Activated naive CD8-positive, alpha-beta T cell treated with anti-CD3 and anti-CD28 coated beads, Interleukin-2, amount 10 ng/mL, durations not matched to agents 7 days and 5 days (primary cell): ENCODE measurements at regions of chr10 and their contacts with region 1.

Region 1: GRCh38 chr10:80472234-80473095 is 18.4 kb downstream of the TSPAN14 start:
- DNase-seq: no peak
- ATAC-seq: peak; percentile 59
- H3K4me3 Mint-ChIP-seq: peak overlapping the region; percentile 74
- H3K27ac Mint-ChIP-seq: peak overlapping the region; percentile 90
- H3K4me1 Mint-ChIP-seq: peaks cover 75% of the 10 kb centered on the region
- H3K27me3 Mint-ChIP-seq: no peaks in the 10 kb centered on the region

Region 2: GRCh38 chr10:80429521-80429966 is 42.9 kb before region 1 on chr10:
- POLR2A ChIA-PET with region 1: no interaction called
- DNase-seq: no peak
- ATAC-seq: no peak
- H3K4me3 Mint-ChIP-seq: no peak overlapping the region
- H3K27ac Mint-ChIP-seq: peak overlapping the region; percentile 44
- H3K4me1 Mint-ChIP-seq: peaks cover 2% of the 10 kb centered on the region
- H3K27me3 Mint-ChIP-seq: no peaks in the 10 kb centered on the region

Region 3: DNA sequence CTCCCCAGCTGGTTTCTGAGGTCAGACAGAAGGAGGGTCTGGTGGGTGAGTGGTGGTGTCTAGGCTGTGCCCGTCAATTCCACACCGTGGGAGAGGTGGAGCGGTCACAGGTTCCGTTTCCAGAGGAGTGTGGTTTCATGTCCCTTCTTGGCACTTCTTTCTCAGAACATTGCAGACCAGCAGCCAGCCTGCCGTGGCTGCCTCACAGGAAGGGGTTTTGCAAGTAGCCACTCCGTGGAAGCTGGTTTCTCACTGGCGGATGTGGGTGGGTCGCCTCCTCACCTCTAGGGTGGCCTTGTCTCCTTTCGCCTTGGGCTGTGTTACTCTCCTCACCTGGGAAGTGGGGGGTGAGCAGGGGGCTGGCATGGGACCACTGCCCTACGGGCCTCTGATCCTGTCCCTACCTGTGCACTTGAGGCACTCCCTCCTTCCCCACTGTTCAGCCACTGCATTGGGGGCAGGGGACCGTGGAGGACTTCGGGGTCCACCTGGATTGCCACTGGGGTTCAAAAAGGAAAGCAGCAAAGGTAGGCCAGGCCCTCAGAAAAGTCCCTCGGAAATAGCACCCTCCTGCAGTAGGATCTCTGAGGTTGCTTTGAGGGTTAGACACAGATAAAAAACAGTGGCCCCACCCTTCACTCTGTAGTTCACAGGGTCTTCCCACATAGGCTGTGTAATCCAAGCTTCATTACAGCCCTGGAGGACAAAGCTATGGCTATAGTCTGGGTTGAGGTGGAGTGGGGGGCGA is 15.5 kb after region 1 on chr10:
- POLR2A ChIA-PET with region 1: interaction called, 150 read pairs
- DNase-seq: peak; percentile 81
- ATAC-seq: peak; percentile 80
- H3K4me3 Mint-ChIP-seq: peak overlapping the region; percentile 80
- H3K27ac Mint-ChIP-seq: peak overlapping the region; percentile 89
- H3K4me1 Mint-ChIP-seq: peaks cover 93% of the 10 kb centered on the region
- H3K27me3 Mint-ChIP-seq: no peaks in the 10 kb centered on the region